Panc1 (cell line): ENCODE measurements at regions of chr3 and their contacts with region 1.

Region 1: GRCh38 chr3:84066920-84067319 is 891.9 kb upstream of the CADM2 start:
- DNase-seq: no peak
- ATAC-seq: no peak
- H3K4me3 ChIP-seq: no peak overlapping the region
- H3K27ac ChIP-seq: no peak overlapping the region
- H3K4me1 ChIP-seq: no peaks in the 10 kb centered on the region
- H3K27me3 ChIP-seq: no peaks in the 10 kb centered on the region
- CTCF ChIP-seq: no peak

Region 2: GRCh38 chr3:83729576-83729975 is 337.3 kb before region 1 on chr3:
- CTCF ChIA-PET with region 1: no interaction called
- POLR2A ChIA-PET with region 1: no interaction called
- in situ Hi-C with region 1: no loop called
- intact Hi-C with region 1: no loop called
- DNase-seq: no peak
- ATAC-seq: no peak
- H3K4me3 ChIP-seq: no peak overlapping the region
- H3K27ac ChIP-seq: no peak overlapping the region
- H3K4me1 ChIP-seq: no peaks in the 10 kb centered on the region
- H3K27me3 ChIP-seq: no peaks in the 10 kb centered on the region
- CTCF ChIP-seq: no peak

Region 3: DNA sequence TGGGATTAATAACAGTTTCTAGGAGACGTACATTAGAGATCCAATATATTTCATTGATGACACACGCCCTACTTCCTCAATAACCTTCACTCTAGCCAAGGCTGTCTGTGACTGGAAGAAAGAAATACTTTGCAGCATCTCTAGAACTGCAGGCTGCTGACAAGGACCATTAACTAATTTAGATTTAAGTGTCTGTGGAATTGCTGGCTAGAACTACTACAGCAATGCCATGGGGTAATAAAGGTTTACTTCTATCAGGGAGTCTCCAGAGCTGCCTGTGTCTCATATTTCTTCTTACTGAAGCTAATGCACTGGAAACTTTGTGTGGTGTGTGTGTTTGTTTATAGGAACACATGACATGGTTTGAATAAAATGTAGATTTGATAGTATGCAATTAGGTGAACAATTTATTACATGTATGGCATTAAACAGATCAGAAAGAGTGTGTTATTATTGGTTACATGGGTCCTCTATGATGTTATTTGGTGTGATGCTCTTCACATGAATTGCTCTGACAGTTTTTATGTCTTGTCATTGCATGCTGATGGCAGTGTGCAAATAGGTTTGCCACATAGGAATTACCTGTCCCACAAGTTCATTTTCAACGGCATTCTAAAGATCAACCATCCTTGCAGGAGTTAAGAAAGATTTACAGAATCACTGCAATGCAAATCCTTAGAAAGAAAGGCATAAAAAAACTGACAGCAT is 24.4 kb before region 1 on chr3:
- CTCF ChIA-PET with region 1: no interaction called
- POLR2A ChIA-PET with region 1: interaction called, 11 read pairs
- in situ Hi-C with region 1: no loop called
- intact Hi-C with region 1: no loop called
- DNase-seq: no peak
- ATAC-seq: no peak
- H3K4me3 ChIP-seq: no peak overlapping the region
- H3K27ac ChIP-seq: no peak overlapping the region
- H3K4me1 ChIP-seq: no peaks in the 10 kb centered on the region
- H3K27me3 ChIP-seq: no peaks in the 10 kb centered on the region
- CTCF ChIP-seq: no peak

Region 4: DNA sequence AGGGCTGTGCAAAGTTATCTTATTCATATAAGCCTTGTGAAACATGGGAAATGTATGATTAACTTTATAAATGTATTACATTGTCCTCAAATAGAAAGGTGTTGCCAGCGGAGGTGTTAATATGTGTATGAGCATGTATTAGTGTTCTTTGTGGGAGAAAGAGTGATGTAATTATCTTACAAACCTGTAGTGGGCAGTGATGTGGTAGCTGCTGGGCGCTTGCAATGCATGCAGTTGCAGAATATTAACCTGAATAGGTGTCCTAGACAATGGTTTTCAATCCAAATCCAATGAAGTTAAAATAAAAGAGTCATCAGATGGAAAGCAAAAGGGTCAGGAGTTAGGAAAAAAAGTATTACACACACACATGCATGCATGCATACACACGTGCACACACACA is 10.6 kb after region 1 on chr3:
- CTCF ChIA-PET with region 1: no interaction called
- POLR2A ChIA-PET with region 1: no interaction called
- in situ Hi-C with region 1: no loop called
- intact Hi-C with region 1: no loop called
- DNase-seq: peak; percentile 2
- ATAC-seq: no peak
- H3K4me3 ChIP-seq: no peak overlapping the region
- H3K27ac ChIP-seq: no peak overlapping the region
- H3K4me1 ChIP-seq: no peaks in the 10 kb centered on the region
- H3K27me3 ChIP-seq: no peaks in the 10 kb centered on the region
- CTCF ChIP-seq: peak; percentile 39; the same call in 1 of the 2 replicates

Region 5: DNA sequence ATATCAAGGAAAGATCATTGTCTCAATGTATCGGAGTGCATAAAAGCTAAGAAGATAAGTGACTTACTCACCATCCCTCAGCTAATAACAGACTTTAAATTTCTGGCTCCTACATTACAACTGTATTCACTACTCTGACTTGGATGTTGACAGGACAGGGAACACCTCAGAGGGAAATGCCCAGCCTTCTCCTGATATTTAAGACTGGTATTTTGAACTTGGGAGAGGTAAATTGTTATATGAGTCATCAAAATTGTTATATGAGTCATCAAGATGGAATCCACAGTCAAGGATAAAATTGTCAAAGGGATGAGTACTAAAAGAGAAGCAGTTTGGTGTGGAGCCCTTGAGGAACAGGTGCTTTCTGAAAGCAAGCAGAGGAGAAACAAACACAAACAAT is 1962.7 kb after region 1 on chr3:
- CTCF ChIA-PET with region 1: no interaction called
- POLR2A ChIA-PET with region 1: no interaction called
- in situ Hi-C with region 1: no loop called
- intact Hi-C with region 1: no loop called
- DNase-seq: no peak
- ATAC-seq: no peak
- H3K4me3 ChIP-seq: no peak overlapping the region
- H3K27ac ChIP-seq: no peak overlapping the region
- H3K4me1 ChIP-seq: no peaks in the 10 kb centered on the region
- H3K27me3 ChIP-seq: no peaks in the 10 kb centered on the region
- CTCF ChIP-seq: no peak